ENCODE measurements at regions of chr11 and their contacts with region 1.

Region 1: DNA sequence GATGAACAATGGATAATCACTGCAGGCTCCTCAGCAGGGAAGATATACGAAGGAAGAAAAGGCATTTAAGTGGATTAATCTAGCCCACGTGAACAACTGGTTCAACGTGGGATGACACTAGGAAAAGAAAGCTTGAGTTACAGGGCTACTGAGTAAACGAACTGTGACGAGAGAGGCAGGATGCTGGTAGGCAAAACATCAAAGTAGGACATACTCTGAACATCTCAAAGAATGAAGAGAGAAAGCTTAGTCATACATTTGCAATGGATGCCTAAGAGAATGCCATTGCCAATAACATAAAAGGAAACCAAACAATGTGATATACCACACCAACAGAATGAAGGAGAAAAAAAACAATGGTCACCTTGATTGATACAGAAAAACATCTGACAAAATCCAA is 12.9 kb downstream of the USP28 start:
- DNase-seq: peak; percentile 79
- ATAC-seq: peak; percentile 46; the same call in 1 of the 3 replicates
- H3K4me3 ChIP-seq: no peak overlapping the region
- H3K27ac ChIP-seq: no peak overlapping the region
- H3K4me1 ChIP-seq: peaks cover 18% of the 10 kb centered on the region
- H3K27me3 ChIP-seq: no peaks in the 10 kb centered on the region
- CTCF ChIP-seq: no peak
- EP300 ChIP-seq: no peak
- POLR2A ChIP-seq: no peak
- RAD21 ChIP-seq: no peak

Region 2: GRCh38 chr11:113555071-113555619 is 307.3 kb before region 1 on chr11:
- CTCF ChIA-PET with region 1: no interaction called
- POLR2A ChIA-PET with region 1: no interaction called
- in situ Hi-C with region 1: no loop called
- intact Hi-C with region 1: loop called (anchors 5 kb)
- DNase-seq: no peak
- ATAC-seq: no peak
- H3K4me3 ChIP-seq: no peak overlapping the region
- H3K27ac ChIP-seq: no peak overlapping the region
- H3K4me1 ChIP-seq: no peaks in the 10 kb centered on the region
- H3K27me3 ChIP-seq: peaks cover 0 to 7% of the 10 kb centered on the region in 2 experiments; a peak in 1 of 5 replicates
- CTCF ChIP-seq: no peak
- EP300 ChIP-seq: no peak
- POLR2A ChIP-seq: no peak
- RAD21 ChIP-seq: no peak

Measured in HepG2 (cell line).